ENCODE measurements at regions of chr5 and their contacts with region 1.

Region 1: GRCh38 chr5:149938791-149939358 is 5.7 kb downstream of the PDE6A start:
- DNase-seq: peak; percentile 98
- H3K4me3 ChIP-seq: peak overlapping the region in 1 of 3 experiments; percentile 17
- H3K27ac ChIP-seq: peak overlapping the region; percentile 100
- H3K4me1 ChIP-seq: peaks cover 68% of the 10 kb centered on the region
- H3K27me3 ChIP-seq: no peaks in the 10 kb centered on the region
- CTCF ChIP-seq: peak in 1 of 2 donors; percentile 7

Region 2: GRCh38 chr5:149434162-149435014 is 504.5 kb before region 1 on chr5:
- CTCF ChIA-PET with region 1: no interaction called
- dilution Hi-C with region 1: no loop called
- in situ Hi-C with region 1: no loop called
- intact Hi-C with region 1: no loop called
- DNase-seq: no peak
- H3K4me3 ChIP-seq: no peak overlapping the region
- H3K27ac ChIP-seq: no peak overlapping the region
- H3K4me1 ChIP-seq: peaks cover 16% of the 10 kb centered on the region
- H3K27me3 ChIP-seq: no peaks in the 10 kb centered on the region
- CTCF ChIP-seq: peak; percentile 93

Region 3: DNA sequence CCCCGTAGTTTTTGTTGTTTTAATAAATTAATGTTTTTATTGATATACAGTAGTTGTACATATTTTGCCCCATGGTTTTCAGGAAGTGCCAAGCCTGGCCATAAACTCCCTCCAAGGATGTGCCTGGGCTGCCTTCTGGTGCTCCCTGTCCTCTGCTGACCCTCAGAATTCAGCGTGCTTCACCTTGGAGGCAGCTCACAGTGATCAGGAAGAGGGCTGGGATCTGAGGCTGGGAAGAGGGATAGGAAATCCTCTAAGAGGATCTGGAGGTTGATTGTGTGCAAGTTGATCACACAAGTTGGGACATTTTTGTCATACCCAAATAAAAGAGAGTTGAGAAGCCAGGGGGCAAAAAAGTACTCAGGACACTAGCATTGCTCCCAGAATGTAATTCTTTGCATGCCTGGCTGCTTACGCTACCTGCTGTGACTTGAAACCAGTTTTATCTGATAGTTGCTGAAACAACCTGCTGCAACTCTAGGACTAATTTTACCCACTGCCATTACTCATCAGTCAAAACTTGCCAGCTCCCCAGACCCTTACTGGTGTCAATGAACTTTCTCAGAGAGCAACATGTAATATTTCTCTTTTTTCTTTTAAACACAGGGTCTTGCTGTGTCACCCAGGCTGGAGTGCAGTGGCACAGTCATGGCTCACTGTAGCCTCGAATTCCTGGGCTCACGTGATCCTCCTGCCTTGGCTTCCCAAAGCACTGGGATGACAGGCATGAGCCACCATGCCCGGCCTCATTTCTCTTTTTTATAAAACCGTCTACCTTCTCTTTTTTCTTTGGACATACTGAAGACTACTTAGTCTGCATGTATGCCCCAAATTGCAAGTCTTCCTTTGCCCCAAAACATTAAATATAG is 23.2 kb before region 1 on chr5:
- CTCF ChIA-PET with region 1: no interaction called
- dilution Hi-C with region 1: no loop called
- in situ Hi-C with region 1: no loop called
- intact Hi-C with region 1: loop called (anchors 1 kb)
- DNase-seq: peak; percentile 82
- H3K4me3 ChIP-seq: no peak overlapping the region
- H3K27ac ChIP-seq: peak overlapping the region; percentile 56
- H3K4me1 ChIP-seq: peaks cover 41% of the 10 kb centered on the region
- H3K27me3 ChIP-seq: no peaks in the 10 kb centered on the region
- CTCF ChIP-seq: peak in 1 of 2 donors; percentile 8

Region 4: DNA sequence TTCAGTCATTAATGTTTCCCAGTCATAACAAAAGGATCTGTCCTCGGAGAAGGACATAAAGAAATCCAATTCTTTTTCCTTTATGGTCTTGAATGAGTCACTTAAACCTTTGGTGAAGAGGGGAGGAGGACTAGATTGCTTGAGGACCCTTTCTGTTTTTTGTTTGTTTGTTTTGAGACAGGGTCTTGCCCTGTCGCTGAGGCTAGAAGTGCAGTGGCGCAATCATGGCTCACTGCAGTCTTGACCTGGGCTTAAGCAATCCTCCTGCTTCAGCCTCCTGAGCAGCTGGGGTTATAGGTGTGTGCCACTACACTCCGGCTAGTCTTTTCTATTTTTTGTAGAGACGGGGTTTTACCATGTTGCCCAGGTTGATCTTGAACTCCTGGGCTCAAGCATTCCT is 49.3 kb after region 1 on chr5:
- CTCF ChIA-PET with region 1: no interaction called
- dilution Hi-C with region 1: no loop called
- in situ Hi-C with region 1: no loop called
- intact Hi-C with region 1: no loop called
- DNase-seq: no peak
- H3K4me3 ChIP-seq: no peak overlapping the region
- H3K27ac ChIP-seq: no peak overlapping the region
- H3K4me1 ChIP-seq: no peaks in the 10 kb centered on the region
- H3K27me3 ChIP-seq: no peaks in the 10 kb centered on the region
- CTCF ChIP-seq: no peak

Region 5: GRCh38 chr5:150527038-150527437 is 588.2 kb after region 1 on chr5:
- CTCF ChIA-PET with region 1: no interaction called
- dilution Hi-C with region 1: no loop called
- in situ Hi-C with region 1: no loop called
- intact Hi-C with region 1: no loop called
- DNase-seq: peak; percentile 39
- H3K4me3 ChIP-seq: no peak overlapping the region
- H3K27ac ChIP-seq: no peak overlapping the region
- H3K4me1 ChIP-seq: peaks cover 29% of the 10 kb centered on the region
- H3K27me3 ChIP-seq: no peaks in the 10 kb centered on the region
- CTCF ChIP-seq: no peak